ENCODE measurements at regions of chr1 and their contacts with region 1.

Region 1: GRCh38 chr1:47745725-47746597 is 251.2 kb downstream of the TRABD2B start:
- DNase-seq: peak in 1 of 2 donors; percentile 15
- H3K4me3 ChIP-seq: no peak overlapping the region
- CTCF ChIP-seq: no peak
- POLR2A ChIP-seq: no peak

Region 2: DNA sequence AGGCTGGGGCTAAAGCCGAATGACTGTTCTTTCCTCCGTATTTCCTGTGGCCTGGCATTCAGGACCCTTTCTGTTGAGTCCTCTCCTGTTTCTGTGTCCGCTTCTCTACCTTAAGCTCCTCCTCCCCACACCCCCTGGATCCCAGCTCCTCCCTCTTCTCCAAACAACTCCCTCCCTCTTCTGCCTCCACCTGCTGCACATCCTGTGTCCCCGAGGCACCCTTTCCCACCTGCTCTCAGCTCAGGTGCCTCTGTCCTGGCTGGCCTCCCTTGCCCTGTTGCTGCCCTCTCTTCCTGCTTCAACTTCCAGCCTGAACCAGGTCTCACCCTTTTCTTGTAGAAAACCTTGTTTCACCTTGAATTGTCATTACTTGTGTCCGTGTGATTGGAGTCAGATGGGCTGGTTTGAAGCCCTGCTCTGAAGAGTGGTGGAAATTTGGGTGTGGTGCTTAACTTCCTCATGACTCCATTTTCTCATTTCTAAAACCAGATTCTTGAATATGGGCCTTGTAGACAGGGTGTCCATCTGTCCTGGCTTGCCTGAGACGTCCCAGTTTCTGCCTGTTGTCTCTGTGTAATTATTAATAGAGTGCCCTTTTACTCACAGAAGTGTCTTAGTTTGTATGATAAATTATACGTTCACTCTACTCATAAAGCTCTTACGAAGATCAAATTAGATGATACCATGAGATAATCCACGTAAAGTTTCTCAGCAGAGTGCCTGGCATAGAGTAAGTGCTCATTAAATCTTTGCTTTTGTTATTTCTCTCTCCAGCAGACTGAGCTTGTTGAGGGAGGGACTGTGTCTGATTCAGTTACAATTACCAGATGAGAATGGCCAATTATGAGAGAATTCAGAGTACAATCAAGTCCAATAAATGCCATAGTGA is 310.2 kb after region 1 on chr1:
- intact Hi-C with region 1: loop called (anchors 10 kb)
- DNase-seq: no peak
- H3K4me3 ChIP-seq: no peak overlapping the region
- CTCF ChIP-seq: no peak
- POLR2A ChIP-seq: no peak